ENCODE measurements at regions of chr15 and their contacts with region 1.

Region 1: DNA sequence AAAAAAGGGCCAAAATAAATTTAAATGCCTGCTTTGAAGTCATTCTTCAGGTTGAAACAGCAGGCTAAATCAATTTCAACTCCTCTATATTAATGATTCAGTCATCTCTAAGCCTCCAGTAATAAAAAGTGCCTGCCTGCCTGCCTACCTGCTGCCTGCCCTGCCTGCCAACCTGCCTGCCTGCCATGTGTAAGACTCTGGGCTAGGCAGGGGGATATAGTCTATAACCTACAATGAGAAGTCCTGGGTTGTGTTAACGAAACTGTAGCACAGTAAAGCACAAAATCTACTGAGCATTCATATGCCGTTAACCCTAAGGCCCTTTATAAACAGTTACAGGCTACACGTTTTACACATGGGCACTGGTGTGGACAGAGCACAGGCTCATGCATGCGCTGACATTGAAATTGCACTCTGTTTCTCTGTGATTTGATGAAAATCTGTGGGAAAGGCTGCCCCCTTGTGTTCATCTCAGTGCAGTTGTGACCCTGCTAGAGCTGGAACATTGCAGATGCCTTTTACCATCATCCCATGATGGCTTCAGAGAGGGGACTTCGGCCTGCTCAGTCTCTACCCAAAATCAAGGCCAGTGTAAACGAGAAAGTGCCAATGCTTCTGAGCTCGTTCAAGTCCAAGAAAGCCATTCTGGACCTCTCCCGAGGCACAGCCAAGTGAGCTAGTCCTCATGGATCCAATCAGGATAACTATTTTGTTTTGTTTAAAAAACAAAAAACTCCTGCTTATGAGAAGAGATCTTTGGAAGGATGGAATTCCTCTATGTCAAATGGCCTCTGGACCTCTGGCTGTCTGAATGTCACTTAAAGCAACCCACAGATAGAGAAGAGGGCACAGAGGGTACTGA is 64.6 kb downstream of the EFL1 start:
- DNase-seq: peak; percentile 82
- H3K4me3 ChIP-seq: no peak overlapping the region
- H3K27ac ChIP-seq: no peak overlapping the region
- H3K4me1 ChIP-seq: no peaks in the 10 kb centered on the region
- H3K27me3 ChIP-seq: no peaks in the 10 kb centered on the region
- CTCF ChIP-seq: peak; percentile 51 to 80 (median 68)
- EP300 ChIP-seq: no peak
- POLR2A ChIP-seq: no peak

Region 2: GRCh38 chr15:81274931-81275707 is 922.8 kb before region 1 on chr15:
- intact Hi-C with region 1: loop called (anchors 10 kb)
- DNase-seq: peak; percentile 85
- H3K4me3 ChIP-seq: no peak overlapping the region
- H3K27ac ChIP-seq: peak overlapping the region; percentile 17 to 49 (median 35)
- H3K4me1 ChIP-seq: peaks cover 0 to 17% (median 12%) of the 10 kb centered on the region in 4 donors
- H3K27me3 ChIP-seq: no peaks in the 10 kb centered on the region
- CTCF ChIP-seq: peak; percentile 74 to 85 (median 78)
- EP300 ChIP-seq: no peak
- POLR2A ChIP-seq: no peak

Region 3: GRCh38 chr15:81410318-81410753 is 787.6 kb before region 1 on chr15:
- intact Hi-C with region 1: loop called (anchors 5 kb)
- DNase-seq: peak; percentile 77
- H3K4me3 ChIP-seq: no peak overlapping the region
- H3K27ac ChIP-seq: no peak overlapping the region
- H3K4me1 ChIP-seq: peaks cover 0 to 8% (median 0%) of the 10 kb centered on the region in 4 donors
- H3K27me3 ChIP-seq: peaks cover 0 to 3% (median 0%) of the 10 kb centered on the region in 3 donors
- CTCF ChIP-seq: peak in 3 of 4 experiments; percentile 32 to 48 (median 46)
- EP300 ChIP-seq: no peak
- POLR2A ChIP-seq: no peak

Region 4: DNA sequence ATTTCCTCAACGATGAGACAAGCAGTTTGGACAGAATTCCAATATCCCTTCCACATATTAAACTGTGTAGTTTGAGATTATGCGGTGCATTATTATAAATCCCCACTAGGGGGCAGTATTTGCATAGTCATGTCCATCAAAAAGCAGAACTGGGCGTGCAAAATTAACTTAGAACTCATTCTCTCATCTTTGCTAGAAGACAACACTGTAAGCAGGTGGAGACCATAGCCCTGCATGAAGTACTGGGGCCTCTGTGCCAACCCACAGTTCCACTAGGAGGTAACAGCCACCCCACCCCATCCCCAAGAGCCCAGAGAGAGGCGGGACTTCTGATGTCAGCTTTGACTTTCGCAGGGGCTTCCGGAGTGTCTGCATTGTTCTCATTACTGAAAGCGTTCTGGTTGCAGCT is 717.3 kb before region 1 on chr15:
- intact Hi-C with region 1: loop called (anchors 2 kb)
- DNase-seq: no peak
- H3K4me3 ChIP-seq: no peak overlapping the region
- H3K27ac ChIP-seq: no peak overlapping the region
- H3K4me1 ChIP-seq: no peaks in the 10 kb centered on the region
- H3K27me3 ChIP-seq: no peaks in the 10 kb centered on the region
- CTCF ChIP-seq: peak; percentile 58 to 90 (median 86)
- EP300 ChIP-seq: no peak
- POLR2A ChIP-seq: no peak

Region 5: GRCh38 chr15:82108489-82109078 is 89.4 kb before region 1 on chr15:
- intact Hi-C with region 1: loop called (anchors 2 kb)
- DNase-seq: peak; percentile 70
- H3K4me3 ChIP-seq: no peak overlapping the region
- H3K27ac ChIP-seq: no peak overlapping the region
- H3K4me1 ChIP-seq: no peaks in the 10 kb centered on the region
- H3K27me3 ChIP-seq: no peaks in the 10 kb centered on the region
- CTCF ChIP-seq: peak in 3 of 4 experiments; percentile 76 to 83 (median 82)
- EP300 ChIP-seq: no peak
- POLR2A ChIP-seq: no peak

Region 6: GRCh38 chr15:82139823-82140268 is 58.1 kb before region 1 on chr15:
- intact Hi-C with region 1: loop called (anchors 5 kb)
- DNase-seq: no peak
- H3K4me3 ChIP-seq: no peak overlapping the region
- H3K27ac ChIP-seq: no peak overlapping the region
- H3K4me1 ChIP-seq: peaks cover 0 to 10% (median 1%) of the 10 kb centered on the region in 4 donors
- H3K27me3 ChIP-seq: no peaks in the 10 kb centered on the region
- CTCF ChIP-seq: peak; percentile 57 to 72 (median 64)
- EP300 ChIP-seq: no peak
- POLR2A ChIP-seq: no peak